ENCODE measurements at regions of chr5 and their contacts with region 1.

Region 1: GRCh38 chr5:141094481-141095262 is at the start of gene PCDHB2:
- DNase-seq: peak; percentile 42
- H3K4me3 ChIP-seq: peak within 1 kb of the TSS; percentile 31 to 51
- H3K27ac ChIP-seq: no peak within 1 kb of the TSS
- H3K4me1 ChIP-seq: no peaks in the 10 kb centered on the region
- H3K27me3 ChIP-seq: no peaks in the 10 kb centered on the region
- CTCF ChIP-seq: peak; percentile 52
- EP300 ChIP-seq: no peak
- RAD21 ChIP-seq: peak; percentile 41; the same call in 1 of the 2 replicates
- polyA plus RNA-seq, gene PCDHB2: 1.6 and 1.8 TPM in 2 replicates

Region 2: DNA sequence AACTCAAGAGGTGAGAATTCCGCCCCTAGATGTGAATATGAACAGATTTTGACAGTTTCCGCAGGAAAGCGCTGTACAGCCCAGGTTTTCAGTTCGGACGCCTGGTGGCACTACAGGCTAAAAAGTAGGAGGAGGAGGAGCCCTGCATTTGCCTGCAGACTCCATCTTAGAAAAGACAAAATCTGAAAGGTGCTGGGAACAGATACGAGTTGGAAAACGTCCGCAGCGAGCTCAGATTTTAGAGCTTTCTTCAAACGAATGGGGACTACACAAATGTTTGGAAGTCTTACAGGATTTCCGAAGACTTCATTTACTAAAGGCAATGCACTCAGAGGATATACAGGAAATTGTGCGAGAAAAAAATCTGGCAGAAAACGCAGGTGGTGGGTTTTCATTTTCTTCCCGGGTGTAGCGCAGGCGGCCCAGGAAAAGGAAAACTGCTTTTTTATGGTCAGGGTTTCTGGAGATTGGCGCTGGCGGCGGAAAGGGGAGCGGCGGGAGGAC is 10.1 kb before region 1 on chr5:
- CTCF ChIA-PET with region 1: interaction called, 10 read pairs
- POLR2A ChIA-PET with region 1: no interaction called
- DNase-seq: peak; percentile 77
- H3K4me3 ChIP-seq: peak overlapping the region; percentile 60 to 63
- H3K27ac ChIP-seq: peak overlapping the region; percentile 51 to 89; a peak in 3 of 4 replicates
- H3K4me1 ChIP-seq: no peaks in the 10 kb centered on the region; a peak in 1 of 4 replicates
- H3K27me3 ChIP-seq: no peaks in the 10 kb centered on the region
- CTCF ChIP-seq: peak; percentile 75
- EP300 ChIP-seq: no peak
- RAD21 ChIP-seq: peak; percentile 82

Measured in SK-N-SH (cell line).